H1 (cell line): ENCODE measurements at regions of chr19 and their contacts with region 1.

Region 1: DNA sequence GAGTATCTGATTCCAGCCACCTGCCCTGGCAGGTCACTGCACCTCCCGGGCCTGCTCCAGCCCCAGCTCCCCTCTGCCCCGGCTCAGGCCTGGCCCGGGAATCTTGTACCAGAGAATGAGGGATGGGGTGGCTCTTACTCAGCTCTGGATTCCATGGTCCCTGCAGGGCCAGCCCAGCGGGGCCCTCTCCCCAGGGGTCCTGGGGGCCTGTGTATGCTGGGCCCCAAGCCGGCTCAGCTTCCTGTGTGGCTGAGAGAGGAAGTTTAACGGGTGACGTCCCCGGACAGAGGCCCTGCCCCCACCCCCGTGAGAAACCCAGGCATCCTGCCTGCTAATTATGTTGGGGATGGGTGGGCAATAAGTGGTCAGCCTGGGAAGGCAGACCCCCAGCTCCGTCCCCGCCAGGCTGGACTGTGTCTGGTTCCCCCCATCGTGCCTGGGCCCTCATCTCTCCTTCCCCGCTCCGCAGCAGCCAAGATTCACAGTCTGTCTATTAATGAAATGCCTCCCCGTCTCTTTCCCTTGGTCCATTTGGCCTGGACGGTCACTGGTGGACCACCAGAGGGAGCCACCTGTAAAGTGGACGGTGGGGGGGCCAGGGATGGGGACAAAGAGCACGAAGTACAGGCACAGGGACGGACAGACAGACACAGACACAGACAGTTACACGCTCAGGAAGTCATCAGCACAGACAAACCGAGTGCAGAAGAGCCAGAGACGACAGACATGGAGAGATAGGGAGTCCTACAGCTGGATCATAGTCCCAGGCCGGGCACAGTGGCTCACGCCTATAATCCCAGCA is at the start of gene DENND1C:
- DNase-seq: peak in 1 of 2 experiments; percentile 65
- H3K4me3 ChIP-seq: no peak within 1 kb of the TSS
- H3K27ac ChIP-seq: no peak within 1 kb of the TSS
- H3K4me1 ChIP-seq: peaks cover 0 to 11% (median 7%) of the 10 kb centered on the region in 4 experiments; a peak in 5 of 7 replicates
- H3K27me3 ChIP-seq: peaks cover 0 to 4% (median 0%) of the 10 kb centered on the region in 4 experiments; a peak in 1 of 7 replicates
- CTCF ChIP-seq: peak; percentile 70 to 83 (median 72)
- EP300 ChIP-seq: no peak
- POLR2A ChIP-seq: no peak
- RAD21 ChIP-seq: peak; percentile 47 to 65
- total RNA-seq, gene DENND1C: 3.7 and 4.0 TPM in 2 replicates

Region 2: GRCh38 chr19:6491802-6492592 is 10.3 kb after region 1 on chr19:
- CTCF ChIA-PET with region 1: interaction called, 26 read pairs
- POLR2A ChIA-PET with region 1: interaction called, 4 read pairs
- DNase-seq: no peak
- H3K4me3 ChIP-seq: no peak overlapping the region
- H3K27ac ChIP-seq: no peak overlapping the region
- H3K4me1 ChIP-seq: no peaks in the 10 kb centered on the region
- H3K27me3 ChIP-seq: peaks cover 0 to 2% (median 0%) of the 10 kb centered on the region in 4 experiments; a peak in 1 of 7 replicates
- CTCF ChIP-seq: no peak
- EP300 ChIP-seq: no peak
- POLR2A ChIP-seq: no peak
- RAD21 ChIP-seq: no peak

Region 3: DNA sequence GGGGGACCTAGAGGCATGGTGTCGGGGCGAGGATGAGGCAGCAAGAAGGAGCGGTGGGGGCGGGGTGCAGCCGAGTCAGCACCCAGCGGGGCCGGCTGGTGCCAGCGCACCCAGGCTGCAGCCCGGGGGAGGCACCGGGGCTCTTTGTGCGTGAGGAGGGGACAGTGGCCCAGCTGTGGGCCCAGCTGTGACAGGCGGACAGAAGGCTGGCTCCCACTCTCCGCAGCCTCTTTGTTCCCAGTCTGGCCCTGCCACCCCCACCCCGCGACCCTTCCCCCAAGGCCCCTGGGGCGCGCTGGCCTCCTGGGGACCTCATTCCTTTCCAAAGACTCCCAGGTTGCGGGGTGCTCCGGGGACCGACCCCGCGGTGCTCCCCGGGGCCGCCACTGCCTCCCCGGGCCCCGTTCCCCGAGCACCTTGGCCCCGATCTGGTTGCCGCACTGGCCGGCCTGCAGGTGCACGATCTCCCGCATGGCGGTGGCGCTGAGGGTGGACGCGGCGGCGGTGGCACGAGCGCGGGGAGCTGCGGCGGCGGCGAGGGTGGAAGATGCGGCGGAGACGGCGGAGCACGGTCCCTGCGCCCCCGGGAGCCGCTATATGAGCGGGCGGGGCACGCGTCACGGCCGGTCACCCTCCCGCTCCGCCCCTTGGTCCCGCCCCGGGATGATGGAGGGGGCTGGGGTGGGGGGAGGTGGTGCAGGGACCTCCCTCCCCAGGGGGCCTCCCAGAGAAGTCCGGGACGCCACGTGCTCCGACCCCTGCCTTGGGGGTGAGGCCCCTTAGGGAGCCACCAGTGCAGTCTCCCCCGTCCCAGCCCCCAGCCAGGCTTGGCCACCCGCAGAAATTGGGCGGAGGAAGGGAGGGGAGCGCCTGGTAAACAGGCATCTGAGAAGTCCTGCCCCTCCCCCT is 20.3 kb after region 1 on chr19 and contains the start of gene TUBB4A:
- CTCF ChIA-PET with region 1: interaction called, 30 read pairs
- POLR2A ChIA-PET with region 1: interaction called, 4 read pairs
- DNase-seq: peak in 1 of 2 experiments; percentile 75
- H3K4me3 ChIP-seq: peak within 1 kb of the TSS; percentile 44 to 86 (median 59)
- H3K27ac ChIP-seq: no peak within 1 kb of the TSS
- H3K4me1 ChIP-seq: peaks cover 0 to 10% (median 7%) of the 10 kb centered on the region in 4 experiments; a peak in 5 of 7 replicates
- H3K27me3 ChIP-seq: peaks cover 0 to 8% (median 7%) of the 10 kb centered on the region in 4 experiments; a peak in 4 of 7 replicates
- CTCF ChIP-seq: no peak
- EP300 ChIP-seq: no peak
- POLR2A ChIP-seq: no peak
- RAD21 ChIP-seq: no peak
- total RNA-seq, gene TUBB4A: 21.2 and 30.4 TPM in 2 replicates

Region 4: GRCh38 chr19:6509118-6509971 is 27.6 kb after region 1 on chr19:
- CTCF ChIA-PET with region 1: interaction called, 19 read pairs
- POLR2A ChIA-PET with region 1: no interaction called
- DNase-seq: no peak
- H3K4me3 ChIP-seq: no peak overlapping the region
- H3K27ac ChIP-seq: no peak overlapping the region
- H3K4me1 ChIP-seq: no peaks in the 10 kb centered on the region
- H3K27me3 ChIP-seq: no peaks in the 10 kb centered on the region
- CTCF ChIP-seq: no peak
- EP300 ChIP-seq: no peak
- POLR2A ChIP-seq: no peak
- RAD21 ChIP-seq: no peak